Spleen (tissue), 13 donors: ENCODE measurements at regions of chr15 and their contacts with region 1.

Region 1: GRCh38 chr15:72272213-72273002 is at the start of gene PARP6:
- DNase-seq: peak; percentile 100
- H3K4me3 ChIP-seq: peak within 1 kb of the TSS; percentile 62 to 94 (median 82)
- H3K27ac ChIP-seq: peak within 1 kb of the TSS; percentile 84 to 93 (median 88)
- H3K4me1 ChIP-seq: peaks cover 11 to 40% (median 33%) of the 10 kb centered on the region in 6 donors
- H3K27me3 ChIP-seq: no peaks in the 10 kb centered on the region
- CTCF ChIP-seq: peak; percentile 48 to 88 (median 80)
- POLR2A ChIP-seq: peak in 1 of 3 donors; percentile 30
- total RNA-seq, gene PARP6: 54.8 to 77.6 (median 70.3) TPM

Region 2: GRCh38 chr15:72231066-72231846 is 41.2 kb before region 1 on chr15 and contains the start of gene PKM:
- intact Hi-C with region 1: loop called (anchors 5 kb)
- DNase-seq: peak; percentile 98
- H3K4me3 ChIP-seq: peak within 1 kb of the TSS; percentile 92 to 100 (median 98)
- H3K27ac ChIP-seq: peak within 1 kb of the TSS; percentile 89 to 99 (median 97)
- H3K4me1 ChIP-seq: peaks cover 24 to 68% (median 51%) of the 10 kb centered on the region in 6 donors
- H3K27me3 ChIP-seq: no peaks in the 10 kb centered on the region
- CTCF ChIP-seq: peak in 4 of 11 experiments; percentile 15 to 36 (median 31)
- POLR2A ChIP-seq: peak; percentile 74 to 95 (median 90)
- total RNA-seq, gene PKM: 333 to 543 (median 379) TPM